Activated CD4-positive, alpha-beta T cell treated with anti-CD3 and anti-CD28 coated beads, Interleukin-2, amount 10 ng/mL, durations not matched to agents 7 days and 5 days (primary cell): ENCODE measurements at regions of chr5 and their contacts with region 1.

Region 1: GRCh38 chr5:76402886-76403765 is at the start of gene IQGAP2:
- DNase-seq: peak; percentile 89
- H3K4me3 Mint-ChIP-seq: peak within 1 kb of the TSS; percentile 94
- H3K27ac Mint-ChIP-seq: peak within 1 kb of the TSS; percentile 100
- H3K4me1 Mint-ChIP-seq: peaks cover 60% of the 10 kb centered on the region
- H3K27me3 Mint-ChIP-seq: no peaks in the 10 kb centered on the region
- total RNA-seq, gene IQGAP2: 90.5 to 117 TPM

Region 2: DNA sequence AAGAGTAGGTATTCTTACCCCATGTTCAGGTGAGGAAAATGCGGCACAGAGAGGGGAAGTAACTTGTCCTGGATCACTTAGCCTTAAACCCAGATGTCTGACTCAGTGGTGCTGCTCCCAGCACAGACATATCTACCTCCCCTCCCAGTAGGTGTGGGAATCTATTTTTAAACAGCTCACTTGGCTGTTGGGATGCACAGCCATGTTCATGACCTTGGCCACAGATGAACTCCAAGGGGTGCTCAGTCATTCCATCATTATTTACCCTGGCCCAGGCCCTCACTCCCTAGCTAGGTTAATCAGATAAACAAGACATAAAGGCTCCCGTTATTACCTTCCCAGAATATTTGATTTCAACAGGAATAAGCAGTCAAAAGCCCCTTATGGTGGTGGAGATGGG is 88.5 kb before region 1 on chr5:
- CTCF ChIA-PET with region 1: no interaction called
- POLR2A ChIA-PET with region 1: no interaction called
- DNase-seq: no peak
- H3K4me3 Mint-ChIP-seq: no peak overlapping the region
- H3K27ac Mint-ChIP-seq: no peak overlapping the region
- H3K4me1 Mint-ChIP-seq: peaks cover 12% of the 10 kb centered on the region
- H3K27me3 Mint-ChIP-seq: peaks cover 5% of the 10 kb centered on the region

Region 3: GRCh38 chr5:76415855-76416254 is 12.7 kb after region 1 on chr5:
- CTCF ChIA-PET with region 1: interaction called, 12 read pairs
- POLR2A ChIA-PET with region 1: no interaction called
- DNase-seq: no peak
- H3K4me3 Mint-ChIP-seq: no peak overlapping the region
- H3K27ac Mint-ChIP-seq: peak overlapping the region; percentile 46
- H3K4me1 Mint-ChIP-seq: peaks cover 30% of the 10 kb centered on the region
- H3K27me3 Mint-ChIP-seq: no peaks in the 10 kb centered on the region

Region 4: DNA sequence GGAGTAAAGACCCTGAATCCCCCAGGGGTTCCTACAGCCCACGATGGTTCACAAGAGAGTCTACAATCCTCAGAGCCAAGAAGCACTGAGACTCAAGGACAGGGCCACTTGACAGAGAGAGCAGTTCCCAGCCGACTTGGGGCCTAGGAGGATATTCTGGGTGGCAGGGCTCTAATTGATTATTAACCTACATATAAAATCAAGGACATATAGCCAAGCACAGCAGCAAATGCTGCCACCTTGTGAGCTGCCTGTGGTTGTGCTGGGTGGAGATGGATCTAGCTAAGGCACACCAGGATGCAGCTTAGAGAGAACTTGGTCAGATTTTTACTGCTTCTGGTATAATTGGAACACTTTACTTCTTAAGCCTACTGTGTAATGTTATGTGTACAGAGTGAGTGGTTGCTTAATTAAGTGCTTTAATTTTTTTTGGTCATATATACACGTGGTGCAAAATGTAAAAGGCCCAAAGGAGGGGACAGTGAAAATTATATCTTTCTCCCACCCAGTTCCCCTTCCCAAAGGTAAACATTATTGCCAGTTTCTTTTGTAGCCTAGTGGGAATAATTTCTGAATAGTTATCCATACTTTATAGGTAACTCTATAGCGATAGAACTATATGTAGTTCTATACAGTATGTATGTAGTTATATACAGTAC is 141.3 kb after region 1 on chr5:
- CTCF ChIA-PET with region 1: interaction called, 22 read pairs
- POLR2A ChIA-PET with region 1: interaction called, 13 read pairs
- DNase-seq: peak; percentile 73
- H3K4me3 Mint-ChIP-seq: peak overlapping the region; percentile 66
- H3K27ac Mint-ChIP-seq: peak overlapping the region; percentile 95
- H3K4me1 Mint-ChIP-seq: peaks cover 90% of the 10 kb centered on the region
- H3K27me3 Mint-ChIP-seq: no peaks in the 10 kb centered on the region

Region 5: GRCh38 chr5:76582230-76583162 is 179.4 kb after region 1 on chr5:
- CTCF ChIA-PET with region 1: interaction called, 5 read pairs
- POLR2A ChIA-PET with region 1: interaction called, 10 read pairs
- DNase-seq: no peak
- H3K4me3 Mint-ChIP-seq: no peak overlapping the region
- H3K27ac Mint-ChIP-seq: no peak overlapping the region
- H3K4me1 Mint-ChIP-seq: peaks cover 22% of the 10 kb centered on the region
- H3K27me3 Mint-ChIP-seq: no peaks in the 10 kb centered on the region

Region 6: GRCh38 chr5:77630258-77631089 is 1227.3 kb after region 1 on chr5:
- CTCF ChIA-PET with region 1: no interaction called
- POLR2A ChIA-PET with region 1: no interaction called
- DNase-seq: peak; percentile 37
- H3K4me3 Mint-ChIP-seq: peak overlapping the region; percentile 71
- H3K27ac Mint-ChIP-seq: peak overlapping the region; percentile 17
- H3K4me1 Mint-ChIP-seq: peaks cover 19% of the 10 kb centered on the region
- H3K27me3 Mint-ChIP-seq: peaks cover 74% of the 10 kb centered on the region